ENCODE measurements at regions of chr10 and their contacts with region 1.

Region 1: GRCh38 chr10:76036111-76036940 is 604.9 kb downstream of the LRMDA start:
- DNase-seq: peak; percentile 74 to 87 (median 86)
- H3K4me3 ChIP-seq: no peak overlapping the region
- H3K27ac ChIP-seq: no peak overlapping the region
- H3K4me1 ChIP-seq: peaks cover 6% of the 10 kb centered on the region
- H3K27me3 ChIP-seq: no peaks in the 10 kb centered on the region
- CTCF ChIP-seq: peak; percentile 75 to 89 (median 76)
- EP300 ChIP-seq: no peak
- POLR2A ChIP-seq: no peak

Region 2: DNA sequence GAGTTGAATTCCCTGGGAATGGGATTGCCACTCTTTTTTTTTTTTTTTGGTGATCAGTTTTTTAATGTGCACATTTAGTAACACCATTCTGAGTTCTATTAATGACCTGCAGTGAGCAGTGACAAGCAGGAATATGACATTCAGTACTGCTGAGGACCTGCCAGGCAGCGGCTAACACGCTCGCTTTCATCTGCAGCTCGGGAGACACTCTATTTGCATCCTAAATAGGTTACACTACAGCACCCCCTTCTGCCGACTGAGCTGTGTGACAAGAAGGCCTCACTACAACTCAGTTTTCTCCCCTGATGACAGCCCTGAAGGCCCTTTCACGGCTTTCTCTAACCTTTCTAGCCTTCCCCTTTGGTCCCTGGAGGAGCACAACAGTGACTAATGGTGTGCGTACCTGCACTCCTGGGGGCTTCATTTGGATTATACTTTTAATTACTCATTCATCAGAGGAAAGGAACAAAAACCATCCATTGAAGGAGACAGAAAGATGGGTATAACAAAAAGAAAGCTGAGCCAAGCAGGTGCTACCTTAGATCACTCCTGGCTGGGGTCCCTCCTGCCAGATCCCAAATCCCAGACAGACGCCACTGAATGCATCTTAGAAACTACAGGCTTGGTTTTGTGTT is 267.5 kb after region 1 on chr10:
- intact Hi-C with region 1: loop called in 1 of 4 experiments (anchors 10 kb)
- DNase-seq: peak; percentile 66 to 83 (median 77)
- H3K4me3 ChIP-seq: no peak overlapping the region
- H3K27ac ChIP-seq: no peak overlapping the region
- H3K4me1 ChIP-seq: peaks cover 5% of the 10 kb centered on the region
- H3K27me3 ChIP-seq: no peaks in the 10 kb centered on the region
- CTCF ChIP-seq: peak; percentile 9 to 52 (median 40)
- EP300 ChIP-seq: no peak
- POLR2A ChIP-seq: no peak

Region 3: GRCh38 chr10:76336213-76336963 is 300.1 kb after region 1 on chr10:
- intact Hi-C with region 1: no loop called
- DNase-seq: peak in 2 of 5 donors; percentile 41 to 44
- H3K4me3 ChIP-seq: no peak overlapping the region
- H3K27ac ChIP-seq: peak overlapping the region in 1 of 2 donors; percentile 52
- H3K4me1 ChIP-seq: peaks cover 16% of the 10 kb centered on the region
- H3K27me3 ChIP-seq: no peaks in the 10 kb centered on the region
- CTCF ChIP-seq: no peak
- EP300 ChIP-seq: no peak
- POLR2A ChIP-seq: no peak

Region 4: GRCh38 chr10:76403912-76404311 is 367.6 kb after region 1 on chr10:
- intact Hi-C with region 1: no loop called
- DNase-seq: peak in 3 of 5 donors; percentile 20 to 24 (median 20)
- H3K4me3 ChIP-seq: no peak overlapping the region
- H3K27ac ChIP-seq: no peak overlapping the region
- H3K4me1 ChIP-seq: peaks cover 5% of the 10 kb centered on the region
- H3K27me3 ChIP-seq: no peaks in the 10 kb centered on the region
- CTCF ChIP-seq: no peak
- EP300 ChIP-seq: no peak
- POLR2A ChIP-seq: no peak

Region 5: GRCh38 chr10:76547352-76547972 is 511.1 kb after region 1 on chr10:
- intact Hi-C with region 1: loop called in 1 of 4 experiments (anchors 10 kb)
- DNase-seq: peak; percentile 78 to 92 (median 84)
- H3K4me3 ChIP-seq: no peak overlapping the region
- H3K27ac ChIP-seq: no peak overlapping the region
- H3K4me1 ChIP-seq: peaks cover 6% of the 10 kb centered on the region
- H3K27me3 ChIP-seq: no peaks in the 10 kb centered on the region
- CTCF ChIP-seq: peak; percentile 76 to 83 (median 82)
- EP300 ChIP-seq: no peak
- POLR2A ChIP-seq: no peak

Region 6: GRCh38 chr10:77004917-77005564 is 968.7 kb after region 1 on chr10:
- intact Hi-C with region 1: loop called in 1 of 4 experiments (anchors 10 kb)
- DNase-seq: no peak
- H3K4me3 ChIP-seq: no peak overlapping the region
- H3K27ac ChIP-seq: no peak overlapping the region
- H3K4me1 ChIP-seq: no peaks in the 10 kb centered on the region
- H3K27me3 ChIP-seq: no peaks in the 10 kb centered on the region
- CTCF ChIP-seq: peak; percentile 54 to 71 (median 63)
- EP300 ChIP-seq: no peak
- POLR2A ChIP-seq: no peak

Measured in ovary (tissue), 10 donors.